Ovary (tissue), 10 donors: ENCODE measurements at regions of chr6 and their contacts with region 1.

Region 1: DNA sequence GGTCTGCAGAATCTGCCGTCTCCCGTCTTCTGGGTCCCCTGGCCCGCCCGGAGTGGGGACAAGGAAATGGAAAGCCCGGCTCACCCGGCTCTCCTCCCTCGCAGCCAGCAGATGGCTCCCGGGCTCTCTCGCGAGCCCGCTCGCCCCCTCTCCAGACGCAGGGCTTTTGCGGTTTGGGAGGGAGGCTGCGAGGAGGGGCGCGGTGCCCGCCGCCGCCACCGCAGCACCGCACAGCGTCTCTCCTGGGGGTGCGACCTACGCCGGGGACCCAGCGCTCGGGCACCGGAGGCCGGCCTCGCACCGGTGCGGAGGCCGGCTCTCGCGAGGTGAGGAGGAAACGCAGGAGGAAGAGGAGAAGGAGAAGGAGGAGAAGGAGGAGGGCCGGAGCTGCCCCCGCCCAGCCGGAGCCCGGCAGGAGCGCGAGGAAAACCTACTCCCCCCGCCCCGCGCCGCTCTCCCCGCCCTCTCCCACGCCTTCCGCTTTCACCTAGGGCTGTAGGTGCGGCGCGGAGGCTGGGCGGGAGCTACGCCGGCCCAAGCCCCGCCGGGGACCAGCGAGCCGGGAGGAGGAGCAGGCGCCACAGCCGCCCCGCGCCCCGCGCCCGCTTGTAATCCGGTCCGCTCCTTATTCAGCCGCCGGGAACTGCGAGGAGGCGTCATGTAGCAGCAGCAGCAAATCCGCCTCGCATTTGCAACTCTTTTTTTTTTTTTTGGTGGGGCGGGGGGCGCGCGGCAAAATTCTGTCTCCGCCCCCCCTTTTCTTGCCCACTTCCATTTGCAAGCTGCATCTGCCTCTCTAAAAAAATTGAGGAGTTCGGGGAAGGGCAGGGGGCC is at the start of gene CARMIL1:
- DNase-seq: peak; percentile 82 to 86 (median 84)
- H3K4me3 ChIP-seq: peak within 1 kb of the TSS; percentile 91
- H3K27ac ChIP-seq: peak within 1 kb of the TSS; percentile 66 to 69
- H3K4me1 ChIP-seq: peaks cover 6% of the 10 kb centered on the region
- H3K27me3 ChIP-seq: no peaks in the 10 kb centered on the region
- CTCF ChIP-seq: peak; percentile 73 to 84 (median 79)
- EP300 ChIP-seq: no peak
- POLR2A ChIP-seq: no peak
- total RNA-seq, gene CARMIL1: 11.1 to 25.6 (median 18.4) TPM

Region 2: GRCh38 chr6:25490018-25490801 is 211.1 kb after region 1 on chr6:
- intact Hi-C with region 1: loop called (anchors 2 to 5 kb)
- DNase-seq: peak; percentile 62 to 80 (median 71)
- H3K4me3 ChIP-seq: no peak overlapping the region
- H3K27ac ChIP-seq: no peak overlapping the region
- H3K4me1 ChIP-seq: peaks cover 2% of the 10 kb centered on the region
- H3K27me3 ChIP-seq: no peaks in the 10 kb centered on the region
- CTCF ChIP-seq: peak; percentile 58 to 73 (median 71)
- EP300 ChIP-seq: no peak
- POLR2A ChIP-seq: no peak